Head of caudate nucleus (tissue), 42 donors: ENCODE measurements at regions of chr5 and their contacts with region 1.

Region 1: GRCh38 chr5:148730943-148731861 is 76.9 kb upstream of the HTR4 start:
- DNase-seq: peak; percentile 18 to 95 (median 81)

Region 2: DNA sequence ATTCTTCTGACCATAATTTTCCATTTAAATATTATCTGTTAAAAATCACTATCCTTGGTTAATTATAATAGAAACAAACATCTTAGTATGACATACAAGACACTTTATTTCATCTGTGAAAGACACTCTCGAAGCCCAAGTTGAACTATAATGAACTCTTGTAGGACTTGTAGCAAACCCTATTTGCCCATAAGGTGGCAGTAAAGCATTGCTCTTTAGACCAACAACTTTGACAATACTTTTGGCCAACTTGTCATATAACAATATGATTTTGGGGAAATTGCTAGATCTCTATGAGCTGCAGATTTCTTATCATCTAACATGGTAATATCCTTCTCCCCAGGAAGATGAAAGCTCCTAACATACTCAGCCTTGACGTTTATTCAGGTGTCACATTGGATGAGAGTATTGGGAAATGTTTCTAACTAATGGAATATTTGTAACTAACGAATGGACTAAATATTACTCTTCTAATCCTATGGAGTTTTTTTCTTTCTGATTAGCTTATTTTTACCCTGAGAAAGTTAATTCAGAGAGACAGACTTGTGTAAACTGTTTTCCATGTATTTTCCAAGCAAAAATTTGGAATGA is 551.9 kb before region 1 on chr5:
- intact Hi-C with region 1: loop called (anchors 10 kb)
- DNase-seq: peak in 10 of 42 donors; percentile 8 to 53 (median 27)

Region 3: GRCh38 chr5:148443998-148444397 is 287.2 kb before region 1 on chr5:
- intact Hi-C with region 1: loop called (anchors 5 kb)
- DNase-seq: peak in 29 of 42 donors; percentile 9 to 88 (median 67)